ENCODE measurements at regions of chrX and their contacts with region 1.

Region 1: GRCh38 chrX:24054182-24055042 is at the start of gene EIF2S3:
- DNase-seq: peak; percentile 90
- ATAC-seq: peak; percentile 88
- H3K4me3 Mint-ChIP-seq: no peak within 1 kb of the TSS
- H3K27ac Mint-ChIP-seq: no peak within 1 kb of the TSS
- H3K4me1 Mint-ChIP-seq: peaks cover 3% of the 10 kb centered on the region
- H3K27me3 Mint-ChIP-seq: no peaks in the 10 kb centered on the region
- CTCF ChIP-seq: peak; percentile 58
- total RNA-seq, gene EIF2S3: 350 to 366 TPM

Region 2: DNA sequence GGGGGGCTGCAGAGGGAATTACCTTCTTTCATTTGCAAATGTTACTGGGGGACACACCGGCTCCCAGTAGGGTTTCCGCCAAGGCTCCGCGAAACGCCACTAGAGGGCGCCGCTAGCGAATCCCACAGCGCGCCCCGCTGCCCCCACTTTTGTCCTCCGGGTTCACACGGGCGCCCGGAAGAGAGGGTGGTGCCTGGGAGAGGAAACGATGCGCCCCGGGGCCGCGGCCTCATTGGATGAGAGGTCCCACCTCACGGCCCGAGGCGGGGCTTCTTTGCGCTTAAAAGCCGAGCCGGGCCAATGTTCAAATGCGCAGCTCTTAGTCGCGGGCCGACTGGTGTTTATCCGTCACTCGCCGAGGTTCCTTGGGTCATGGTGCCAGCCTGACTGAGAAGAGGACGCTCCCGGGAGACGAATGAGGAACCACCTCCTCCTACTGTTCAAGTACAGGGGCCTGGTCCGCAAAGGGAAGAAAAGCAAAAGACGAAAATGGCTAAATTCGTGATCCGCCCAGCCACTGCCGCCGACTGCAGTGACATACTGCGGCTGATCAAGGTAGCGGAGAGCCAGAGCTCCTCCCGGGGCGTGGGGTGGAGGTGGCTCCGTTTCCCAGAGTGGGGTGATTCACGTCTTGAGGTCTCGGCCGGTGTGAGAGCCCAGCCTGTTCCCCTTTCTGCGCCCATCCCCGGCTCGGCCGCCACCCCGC is 271.4 kb before region 1 on chrX and contains the start of gene SAT1:
- CTCF ChIA-PET with region 1: interaction called, 4 read pairs
- POLR2A ChIA-PET with region 1: interaction called, 7 read pairs
- intact Hi-C with region 1: loop called (anchors 5 kb)
- DNase-seq: peak; percentile 96
- ATAC-seq: peak; percentile 87
- H3K4me3 Mint-ChIP-seq: peak within 1 kb of the TSS; percentile 88
- H3K27ac Mint-ChIP-seq: peak within 1 kb of the TSS; percentile 97
- H3K4me1 Mint-ChIP-seq: peaks cover 35% of the 10 kb centered on the region
- H3K27me3 Mint-ChIP-seq: no peaks in the 10 kb centered on the region
- CTCF ChIP-seq: peak; percentile 68
- total RNA-seq, gene SAT1: 94.1 to 101 TPM

Region 3: GRCh38 chrX:23907498-23908218 is 146.8 kb before region 1 on chrX and contains the starts of genes APOO and CXorf58:
- CTCF ChIA-PET with region 1: interaction called, 42 read pairs
- POLR2A ChIA-PET with region 1: interaction called, 6 read pairs
- intact Hi-C with region 1: loop called (anchors 10 kb)
- DNase-seq: peak; percentile 92
- ATAC-seq: peak; percentile 92
- H3K4me3 Mint-ChIP-seq: peak within 1 kb of the TSS; percentile 78
- H3K27ac Mint-ChIP-seq: peak within 1 kb of the TSS; percentile 91
- H3K4me1 Mint-ChIP-seq: peaks cover 19% of the 10 kb centered on the region
- H3K27me3 Mint-ChIP-seq: no peaks in the 10 kb centered on the region
- CTCF ChIP-seq: peak; percentile 58
- total RNA-seq, gene APOO: 34.1 to 35.7 TPM
- total RNA-seq, gene CXorf58: 0.14 TPM in 1 of 2 experiments, not detected in the other

Region 4: GRCh38 chrX:23980011-23980441 is 74.4 kb before region 1 on chrX:
- CTCF ChIA-PET with region 1: no interaction called
- POLR2A ChIA-PET with region 1: no interaction called
- intact Hi-C with region 1: no loop called
- DNase-seq: no peak
- ATAC-seq: no peak
- H3K4me3 Mint-ChIP-seq: no peak overlapping the region
- H3K27ac Mint-ChIP-seq: no peak overlapping the region
- H3K4me1 Mint-ChIP-seq: peaks cover 7% of the 10 kb centered on the region
- H3K27me3 Mint-ChIP-seq: no peaks in the 10 kb centered on the region
- CTCF ChIP-seq: no peak

Region 5: DNA sequence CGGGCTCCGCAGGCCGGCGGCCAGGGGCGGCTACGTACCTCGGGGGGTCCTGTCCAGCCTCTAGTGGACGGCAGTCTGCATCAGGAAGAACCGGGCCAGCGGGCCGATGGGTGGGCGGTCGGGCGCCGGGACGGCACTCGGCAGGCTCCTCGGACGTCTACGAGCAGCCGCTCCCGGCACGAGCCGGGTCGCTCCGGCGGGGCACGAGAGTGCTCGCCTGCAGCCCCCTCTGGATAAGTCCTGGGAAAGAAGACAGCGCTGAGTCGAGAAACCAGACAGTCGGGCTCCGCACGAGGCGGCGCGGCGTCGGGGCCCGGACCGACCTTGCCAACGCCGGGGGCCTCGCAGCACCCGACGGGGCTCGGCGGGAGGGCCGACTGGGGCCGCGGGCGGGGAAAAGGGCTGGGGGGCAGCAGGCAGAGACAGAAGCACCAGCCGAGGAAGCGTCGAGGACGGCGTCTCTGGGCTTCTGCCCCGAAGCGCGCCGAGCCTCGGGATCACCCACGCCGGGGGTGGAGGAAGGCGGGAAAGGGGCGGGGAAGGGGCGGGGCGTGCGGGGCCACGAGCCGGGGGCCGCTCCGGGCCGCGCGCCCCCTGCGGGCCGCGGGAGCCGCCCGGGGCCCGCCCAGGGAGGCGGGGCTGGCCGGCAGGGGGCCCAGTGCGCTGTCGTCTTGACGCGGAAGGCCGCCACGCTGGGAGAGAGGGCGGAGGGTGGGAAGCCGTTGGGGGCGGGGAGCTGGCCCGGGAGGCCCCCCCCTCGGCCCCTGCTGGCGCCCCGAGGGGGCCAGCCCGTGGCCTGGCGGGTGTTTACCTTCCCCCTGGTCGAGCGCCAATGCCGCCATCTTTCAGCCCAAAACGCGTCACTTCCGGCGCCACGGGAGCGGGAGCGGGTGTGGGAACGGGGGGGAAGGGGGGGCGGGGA is 29.3 kb before region 1 on chrX:
- CTCF ChIA-PET with region 1: interaction called, 33 read pairs
- POLR2A ChIA-PET with region 1: interaction called, 20 read pairs
- intact Hi-C with region 1: no loop called
- DNase-seq: peak; percentile 86
- ATAC-seq: peak; percentile 93
- H3K4me3 Mint-ChIP-seq: peak overlapping the region; percentile 82
- H3K27ac Mint-ChIP-seq: peak overlapping the region; percentile 80
- H3K4me1 Mint-ChIP-seq: peaks cover 21% of the 10 kb centered on the region
- H3K27me3 Mint-ChIP-seq: no peaks in the 10 kb centered on the region
- CTCF ChIP-seq: no peak

Measured in activated CD8-positive, alpha-beta T cell treated with anti-CD3 and anti-CD28 coated beads for 36 hours (primary cell).